ENCODE measurements at regions of chr1 and their contacts with region 1.

Region 1: GRCh38 chr1:211514030-211514754 is 22.2 kb upstream of the RD3 start:
- DNase-seq: peak; percentile 91
- ATAC-seq: peak; percentile 85
- H3K4me3 Mint-ChIP-seq: peak overlapping the region; percentile 28
- H3K27ac Mint-ChIP-seq: no peak overlapping the region
- H3K4me1 Mint-ChIP-seq: peaks cover 22% of the 10 kb centered on the region
- H3K27me3 Mint-ChIP-seq: peaks cover 2% of the 10 kb centered on the region

Region 2: GRCh38 chr1:210407207-210407886 is 1106.8 kb before region 1 on chr1:
- CTCF ChIA-PET with region 1: no interaction called
- POLR2A ChIA-PET with region 1: no interaction called
- intact Hi-C with region 1: loop called in 1 of 2 experiments (anchors 1 kb)
- DNase-seq: peak; percentile 88
- ATAC-seq: peak; percentile 83
- H3K4me3 Mint-ChIP-seq: no peak overlapping the region
- H3K27ac Mint-ChIP-seq: no peak overlapping the region
- H3K4me1 Mint-ChIP-seq: peaks cover 4% of the 10 kb centered on the region
- H3K27me3 Mint-ChIP-seq: no peaks in the 10 kb centered on the region

Region 3: DNA sequence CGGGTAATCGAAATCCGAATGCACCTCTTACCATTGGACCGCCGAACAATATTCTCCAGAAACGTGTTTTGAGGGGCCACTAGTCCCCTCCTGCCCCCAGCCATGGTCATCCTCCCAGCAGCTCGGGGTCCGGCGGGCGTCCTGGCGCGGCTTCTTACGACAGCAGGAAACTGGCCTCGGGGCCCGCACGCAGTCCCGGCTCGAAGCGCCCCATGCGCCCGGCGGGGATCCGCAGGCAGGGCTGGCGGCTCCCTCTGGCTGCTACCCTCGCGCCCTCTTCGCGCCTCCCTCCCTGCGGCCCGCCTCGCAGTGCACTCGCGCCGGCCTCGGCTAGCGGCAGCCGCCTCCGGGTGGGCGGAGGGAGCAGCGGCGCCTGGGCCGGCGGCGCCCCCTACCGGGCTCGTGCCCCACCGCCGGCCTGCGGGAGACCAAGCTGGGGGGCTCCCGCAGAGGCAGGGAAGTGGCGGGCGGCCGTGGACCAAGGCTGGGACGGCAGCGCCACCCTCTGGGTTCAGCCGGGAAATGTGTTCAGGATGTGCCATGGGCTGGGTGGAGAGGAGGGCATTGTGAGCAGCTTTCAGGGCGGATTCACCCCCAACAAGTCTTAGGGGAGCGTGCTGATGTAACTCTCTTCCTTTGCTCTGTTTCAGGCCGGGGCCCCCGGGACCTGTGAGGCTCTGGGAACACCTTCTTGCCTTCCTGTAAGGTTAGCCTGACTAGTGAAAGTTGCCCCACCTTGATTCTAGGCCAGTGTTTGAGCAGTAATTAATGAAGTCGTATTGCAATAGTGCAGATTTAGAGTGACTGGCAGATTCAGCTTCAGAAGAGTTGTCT is 380.1 kb before region 1 on chr1 and contains the start of gene KCNH1:
- CTCF ChIA-PET with region 1: interaction called, 3 read pairs
- POLR2A ChIA-PET with region 1: no interaction called
- intact Hi-C with region 1: loop called (anchors 1 to 10 kb)
- DNase-seq: peak; percentile 91
- ATAC-seq: peak; percentile 92
- H3K4me3 Mint-ChIP-seq: peak within 1 kb of the TSS; percentile 54
- H3K27ac Mint-ChIP-seq: peak within 1 kb of the TSS; percentile 26
- H3K4me1 Mint-ChIP-seq: peaks cover 13% of the 10 kb centered on the region
- H3K27me3 Mint-ChIP-seq: peaks cover 41% of the 10 kb centered on the region
- total RNA-seq, gene KCNH1: not detected

Region 4: GRCh38 chr1:211382714-211383480 is 131.3 kb before region 1 on chr1:
- CTCF ChIA-PET with region 1: interaction called, 4 read pairs
- POLR2A ChIA-PET with region 1: no interaction called
- intact Hi-C with region 1: loop called in 1 of 2 experiments (anchors 1 kb)
- DNase-seq: peak; percentile 86
- ATAC-seq: peak; percentile 72
- H3K4me3 Mint-ChIP-seq: peak overlapping the region; percentile 88
- H3K27ac Mint-ChIP-seq: peak overlapping the region; percentile 98
- H3K4me1 Mint-ChIP-seq: peaks cover 47% of the 10 kb centered on the region
- H3K27me3 Mint-ChIP-seq: no peaks in the 10 kb centered on the region

Region 5: DNA sequence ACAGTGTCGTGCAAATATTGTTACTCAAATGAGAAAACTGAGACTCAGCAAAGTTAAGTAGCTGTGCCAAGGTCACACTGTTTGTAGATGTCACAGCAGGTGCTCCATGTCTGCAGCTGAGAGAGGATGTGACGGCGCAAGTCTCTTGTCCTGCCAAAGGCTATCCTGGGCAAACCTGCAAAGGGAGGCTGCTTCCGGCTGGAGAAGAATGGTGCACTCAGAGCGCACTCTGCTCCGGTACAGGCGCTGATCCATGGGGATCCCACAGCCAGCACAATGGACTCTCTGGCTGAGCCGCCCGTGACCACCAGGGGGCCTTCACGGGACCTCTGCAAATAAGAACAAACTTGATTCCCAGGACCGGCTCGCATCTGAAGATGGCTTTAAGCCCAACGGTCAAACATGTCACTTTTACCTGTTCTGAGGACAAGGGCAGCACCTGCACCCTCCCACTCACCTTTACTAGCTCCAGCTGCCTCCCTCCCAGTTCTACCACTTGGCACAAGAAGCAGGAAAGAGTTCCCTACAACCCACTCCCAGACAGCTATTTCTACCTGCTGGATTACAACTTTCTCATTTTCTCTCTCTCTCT is 44.2 kb before region 1 on chr1:
- CTCF ChIA-PET with region 1: interaction called, 23 read pairs
- POLR2A ChIA-PET with region 1: no interaction called
- intact Hi-C with region 1: no loop called
- DNase-seq: peak; percentile 70
- ATAC-seq: peak; percentile 74
- H3K4me3 Mint-ChIP-seq: no peak overlapping the region
- H3K27ac Mint-ChIP-seq: no peak overlapping the region
- H3K4me1 Mint-ChIP-seq: no peaks in the 10 kb centered on the region
- H3K27me3 Mint-ChIP-seq: no peaks in the 10 kb centered on the region

Region 6: GRCh38 chr1:211524521-211524920 is 10.3 kb after region 1 on chr1:
- CTCF ChIA-PET with region 1: interaction called, 16 read pairs
- POLR2A ChIA-PET with region 1: no interaction called
- intact Hi-C with region 1: no loop called
- DNase-seq: no peak
- ATAC-seq: no peak
- H3K4me3 Mint-ChIP-seq: no peak overlapping the region
- H3K27ac Mint-ChIP-seq: no peak overlapping the region
- H3K4me1 Mint-ChIP-seq: peaks cover 14% of the 10 kb centered on the region
- H3K27me3 Mint-ChIP-seq: no peaks in the 10 kb centered on the region

Region 7: DNA sequence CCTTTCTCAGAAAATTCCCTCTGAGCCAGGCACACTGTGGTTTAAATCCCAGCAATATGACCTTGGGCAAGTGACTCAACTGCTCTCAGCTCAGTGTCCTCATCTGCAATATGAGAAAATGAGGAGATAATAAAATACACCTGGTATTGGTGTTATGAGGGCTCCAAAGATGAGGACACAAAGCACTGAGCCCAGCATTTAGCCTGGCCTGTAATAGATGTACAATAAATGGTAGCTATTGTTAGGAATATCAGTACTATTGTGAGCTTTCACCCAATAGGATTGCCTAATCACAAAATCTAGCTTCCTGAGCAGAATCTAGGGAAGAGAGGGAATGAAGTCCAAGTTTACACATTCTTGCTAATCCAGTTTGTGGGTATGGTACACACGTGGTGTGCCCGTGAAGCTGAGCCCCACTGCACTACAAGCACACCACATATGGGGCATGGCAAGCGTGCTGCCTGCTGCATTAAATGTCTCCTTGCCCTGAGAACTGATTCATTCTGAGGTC is 89.1 kb after region 1 on chr1:
- CTCF ChIA-PET with region 1: no interaction called
- POLR2A ChIA-PET with region 1: no interaction called
- intact Hi-C with region 1: no loop called
- DNase-seq: no peak
- ATAC-seq: no peak
- H3K4me3 Mint-ChIP-seq: no peak overlapping the region
- H3K27ac Mint-ChIP-seq: no peak overlapping the region
- H3K4me1 Mint-ChIP-seq: peaks cover 8% of the 10 kb centered on the region
- H3K27me3 Mint-ChIP-seq: no peaks in the 10 kb centered on the region

Region 8: GRCh38 chr1:211654838-211655787 is 140.9 kb after region 1 on chr1:
- CTCF ChIA-PET with region 1: interaction called, 28 read pairs
- POLR2A ChIA-PET with region 1: no interaction called
- intact Hi-C with region 1: loop called (anchors 1 kb)
- DNase-seq: peak; percentile 91
- ATAC-seq: peak; percentile 100
- H3K4me3 Mint-ChIP-seq: no peak overlapping the region
- H3K27ac Mint-ChIP-seq: no peak overlapping the region
- H3K4me1 Mint-ChIP-seq: no peaks in the 10 kb centered on the region
- H3K27me3 Mint-ChIP-seq: peaks cover 1% of the 10 kb centered on the region

Region 9: GRCh38 chr1:212738330-212738729 is 1224.1 kb after region 1 on chr1:
- CTCF ChIA-PET with region 1: no interaction called
- POLR2A ChIA-PET with region 1: no interaction called
- intact Hi-C with region 1: no loop called
- DNase-seq: no peak
- ATAC-seq: peak; percentile 81
- H3K4me3 Mint-ChIP-seq: no peak overlapping the region
- H3K27ac Mint-ChIP-seq: peak overlapping the region; percentile 85
- H3K4me1 Mint-ChIP-seq: peaks cover 36% of the 10 kb centered on the region
- H3K27me3 Mint-ChIP-seq: no peaks in the 10 kb centered on the region

Measured in activated CD4-positive, alpha-beta T cell treated with anti-CD3 and anti-CD28 coated beads for 36 hours (primary cell).